Activated CD8-positive, alpha-beta T cell treated with anti-CD3 and anti-CD28 coated beads for 36 hours (primary cell): ENCODE measurements at regions of chr5 and their contacts with region 1.

Region 1: GRCh38 chr5:113663880-113664541 is 150.5 kb downstream of the YTHDC2 start:
- DNase-seq: peak; percentile 59
- ATAC-seq: no peak
- H3K4me3 Mint-ChIP-seq: no peak overlapping the region
- H3K27ac Mint-ChIP-seq: no peak overlapping the region
- H3K4me1 Mint-ChIP-seq: no peaks in the 10 kb centered on the region
- H3K27me3 Mint-ChIP-seq: peaks cover 34% of the 10 kb centered on the region
- CTCF ChIP-seq: peak; percentile 45

Region 2: DNA sequence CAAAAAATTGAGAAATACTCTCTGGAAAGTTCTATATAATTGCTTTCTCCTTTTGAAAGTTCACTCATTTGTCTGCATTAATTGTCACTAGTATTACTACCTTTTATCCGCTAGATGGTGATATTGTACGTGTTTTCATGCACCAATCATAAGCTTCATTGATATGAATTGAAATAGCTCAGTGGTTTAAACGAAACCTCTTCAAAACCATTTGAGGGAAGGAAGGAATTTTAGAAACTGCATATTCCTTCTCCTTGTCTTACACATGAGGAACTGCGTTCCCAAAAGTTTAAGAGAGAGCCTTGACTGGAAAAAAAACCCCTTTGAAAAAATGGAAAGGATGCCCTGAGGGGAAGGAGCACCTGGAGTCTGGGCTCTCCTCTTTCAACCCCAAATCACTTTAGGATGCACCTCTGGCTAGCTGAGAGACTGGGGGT is 51.9 kb before region 1 on chr5:
- CTCF ChIA-PET with region 1: interaction called, 52 read pairs
- POLR2A ChIA-PET with region 1: no interaction called
- intact Hi-C with region 1: loop called (anchors 2 kb)
- DNase-seq: no peak
- ATAC-seq: peak; percentile 70
- H3K4me3 Mint-ChIP-seq: no peak overlapping the region
- H3K27ac Mint-ChIP-seq: no peak overlapping the region
- H3K4me1 Mint-ChIP-seq: peaks cover 7% of the 10 kb centered on the region
- H3K27me3 Mint-ChIP-seq: peaks cover 12% of the 10 kb centered on the region
- CTCF ChIP-seq: peak; percentile 78